ENCODE measurements at regions of chr20 and their contacts with region 1.

Region 1: DNA sequence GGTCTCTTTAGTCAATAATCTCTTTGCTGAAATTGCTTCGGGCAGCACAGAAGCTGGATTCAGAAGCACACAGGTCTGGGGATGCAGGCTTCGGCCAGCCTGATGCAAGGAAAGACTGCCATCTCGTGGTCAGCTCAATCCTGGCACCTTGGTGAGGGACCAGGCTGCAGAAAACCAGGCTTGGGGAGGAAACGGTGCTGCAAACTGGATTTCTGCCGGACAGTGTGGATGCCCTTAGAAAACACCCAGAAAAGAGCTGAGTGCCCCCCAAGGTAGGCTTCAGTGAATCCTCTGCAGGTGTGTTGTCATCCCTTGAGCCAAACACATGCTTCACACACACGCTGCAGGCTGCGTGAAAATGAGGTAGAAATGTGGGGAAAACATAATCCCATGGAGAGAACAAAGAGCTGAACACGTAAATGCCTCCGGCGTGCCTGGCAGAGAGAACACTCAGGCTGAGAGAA is 89.8 kb upstream of the PAX1 start:
- DNase-seq: peak; percentile 65
- H3K4me3 Mint-ChIP-seq: no peak overlapping the region
- H3K27ac Mint-ChIP-seq: no peak overlapping the region
- H3K4me1 Mint-ChIP-seq: no peaks in the 10 kb centered on the region
- H3K27me3 Mint-ChIP-seq: peaks cover 8% of the 10 kb centered on the region

Region 2: GRCh38 chr20:21520702-21521595 is 94.7 kb before region 1 on chr20:
- CTCF ChIA-PET with region 1: interaction called, 14 read pairs
- POLR2A ChIA-PET with region 1: no interaction called
- intact Hi-C with region 1: no loop called
- DNase-seq: no peak
- H3K4me3 Mint-ChIP-seq: peak overlapping the region; percentile 31
- H3K27ac Mint-ChIP-seq: peak overlapping the region; percentile 10
- H3K4me1 Mint-ChIP-seq: peaks cover 33% of the 10 kb centered on the region
- H3K27me3 Mint-ChIP-seq: peaks cover 84% of the 10 kb centered on the region

Region 3: GRCh38 chr20:21529863-21530262 is 85.8 kb before region 1 on chr20:
- CTCF ChIA-PET with region 1: interaction called, 31 read pairs
- POLR2A ChIA-PET with region 1: no interaction called
- intact Hi-C with region 1: loop called (anchors 2 kb)
- DNase-seq: no peak
- H3K4me3 Mint-ChIP-seq: no peak overlapping the region
- H3K27ac Mint-ChIP-seq: no peak overlapping the region
- H3K4me1 Mint-ChIP-seq: peaks cover 6% of the 10 kb centered on the region
- H3K27me3 Mint-ChIP-seq: peaks cover 30% of the 10 kb centered on the region

Region 4: DNA sequence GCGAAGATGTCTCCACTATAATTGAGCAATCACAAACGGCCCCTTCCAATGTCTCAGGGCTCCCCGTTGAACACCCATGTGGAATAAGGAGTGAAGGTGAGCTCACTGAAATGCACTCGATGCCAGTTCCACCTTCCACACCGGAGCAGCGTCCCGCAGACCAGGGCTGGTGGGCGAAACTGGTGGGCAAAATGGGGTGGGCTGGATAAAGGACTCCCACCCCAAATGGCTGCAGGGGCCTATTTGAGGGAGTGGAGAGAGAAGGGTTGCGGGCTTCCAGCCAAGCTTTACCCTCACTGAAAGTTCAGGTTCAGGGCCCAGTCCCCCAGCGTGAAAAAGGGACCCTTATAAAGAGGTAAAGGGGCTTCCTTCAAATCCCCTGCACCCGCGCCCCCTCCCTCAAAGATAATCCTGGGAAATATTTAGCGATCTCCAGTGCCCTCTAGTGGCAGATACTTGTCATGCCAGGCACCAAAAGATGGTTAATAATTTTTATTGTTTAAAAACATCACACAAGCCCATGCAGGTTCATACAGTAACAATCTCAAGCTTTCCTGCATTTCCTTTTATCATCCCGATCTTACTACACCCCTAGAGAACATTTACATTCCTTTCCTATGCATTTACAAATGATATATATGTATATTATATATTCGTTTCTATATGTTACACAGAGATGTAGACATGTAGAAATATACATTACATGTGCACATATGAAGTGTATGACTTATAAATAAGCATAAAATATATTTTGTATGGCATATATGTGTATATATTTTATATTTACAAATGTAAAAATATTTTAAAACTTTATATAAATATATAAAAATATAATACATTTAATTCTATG is 43.6 kb before region 1 on chr20:
- CTCF ChIA-PET with region 1: interaction called, 10 read pairs
- POLR2A ChIA-PET with region 1: no interaction called
- intact Hi-C with region 1: no loop called
- DNase-seq: peak; percentile 27
- H3K4me3 Mint-ChIP-seq: no peak overlapping the region
- H3K27ac Mint-ChIP-seq: no peak overlapping the region
- H3K4me1 Mint-ChIP-seq: peaks cover 11% of the 10 kb centered on the region
- H3K27me3 Mint-ChIP-seq: peaks cover 11% of the 10 kb centered on the region

Region 5: DNA sequence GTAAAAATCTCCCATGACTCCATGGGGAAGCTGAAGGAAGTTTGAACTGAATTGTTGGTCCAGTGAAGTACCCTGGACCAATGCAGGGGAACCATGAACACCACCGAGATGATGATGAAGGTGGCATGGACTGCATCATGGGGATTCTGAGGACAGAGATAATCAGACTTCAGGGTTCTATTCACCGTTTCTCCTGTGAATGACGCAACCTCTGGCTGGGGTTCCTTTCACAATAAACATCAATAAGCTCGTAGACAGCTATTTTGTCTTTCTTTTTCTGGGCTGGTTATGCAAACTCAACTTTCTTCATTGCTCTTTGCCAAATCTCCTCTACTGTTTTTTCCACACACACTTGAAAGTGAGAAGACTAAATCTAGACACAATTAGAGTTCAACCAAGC is 13.8 kb before region 1 on chr20:
- CTCF ChIA-PET with region 1: interaction called, 10 read pairs
- POLR2A ChIA-PET with region 1: no interaction called
- intact Hi-C with region 1: no loop called
- DNase-seq: no peak
- H3K4me3 Mint-ChIP-seq: no peak overlapping the region
- H3K27ac Mint-ChIP-seq: no peak overlapping the region
- H3K4me1 Mint-ChIP-seq: no peaks in the 10 kb centered on the region
- H3K27me3 Mint-ChIP-seq: peaks cover 2% of the 10 kb centered on the region